PC-3 (cell line): ENCODE measurements at regions of chr17 and their contacts with region 1.

Region 1: DNA sequence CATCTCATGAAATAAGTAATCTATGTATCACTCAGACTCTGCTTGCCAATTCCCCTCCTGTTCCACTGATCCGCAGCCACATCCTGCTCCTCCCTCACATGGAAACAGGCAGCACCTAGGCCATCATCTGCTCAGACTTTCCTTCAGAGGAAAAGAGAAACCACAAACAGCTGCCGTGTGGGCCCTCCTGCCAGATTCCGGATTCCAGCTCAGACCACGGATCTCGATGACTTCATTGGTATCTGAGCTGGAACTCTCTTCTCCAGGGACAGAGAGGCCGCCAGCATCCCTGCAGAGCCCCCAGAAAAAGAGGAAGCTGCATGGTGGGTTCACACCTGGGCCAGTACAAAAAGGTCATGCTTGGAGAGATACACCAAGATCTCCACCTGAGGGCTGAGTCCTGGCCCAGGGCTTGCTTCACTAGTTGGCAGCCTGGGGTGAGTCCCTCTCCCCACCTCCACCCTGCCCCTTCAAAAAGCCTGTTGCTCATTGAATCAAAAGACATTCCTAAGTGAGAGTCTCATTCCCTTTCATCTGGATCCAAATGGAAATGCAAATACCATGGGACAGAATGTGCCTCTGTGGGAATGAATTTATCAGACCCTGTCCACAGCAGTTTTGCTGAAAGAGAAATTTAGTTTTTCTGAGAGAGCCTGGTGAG is 47.2 kb downstream of the HOXB1 start:
- DNase-seq: peak; percentile 99
- ATAC-seq: peak; percentile 88
- H3K4me3 ChIP-seq: peak overlapping the region; percentile 22; the same call in 1 of the 2 replicates
- H3K27ac ChIP-seq: peak overlapping the region; percentile 97
- H3K4me1 ChIP-seq: peaks cover 59% of the 10 kb centered on the region
- H3K27me3 ChIP-seq: no peaks in the 10 kb centered on the region
- CTCF ChIP-seq: no peak

Region 2: DNA sequence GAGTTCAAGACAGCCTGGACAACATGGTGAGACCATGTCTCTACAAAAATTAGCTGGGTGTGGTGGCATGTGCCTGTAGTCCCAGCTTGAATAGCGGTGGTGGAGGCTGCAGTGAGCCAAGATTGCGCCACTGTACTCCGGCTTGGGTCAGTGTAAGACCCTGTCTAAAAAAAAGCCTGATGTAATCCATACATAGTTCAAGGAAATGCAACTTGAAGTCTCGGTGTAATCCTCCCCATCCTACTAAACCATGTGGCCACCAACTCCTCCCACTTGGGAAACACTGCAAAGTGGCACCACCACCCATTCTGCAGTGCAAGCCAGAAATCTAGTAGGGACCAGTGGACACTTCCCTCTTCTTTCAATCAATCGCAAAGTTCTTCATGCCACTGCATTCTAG is 839.3 kb before region 1 on chr17:
- CTCF ChIA-PET with region 1: no interaction called
- POLR2A ChIA-PET with region 1: no interaction called
- intact Hi-C with region 1: no loop called
- DNase-seq: no peak
- ATAC-seq: no peak
- H3K4me3 ChIP-seq: no peak overlapping the region
- H3K27ac ChIP-seq: no peak overlapping the region
- H3K4me1 ChIP-seq: peaks cover 8% of the 10 kb centered on the region
- H3K27me3 ChIP-seq: no peaks in the 10 kb centered on the region
- CTCF ChIP-seq: no peak

Region 3: DNA sequence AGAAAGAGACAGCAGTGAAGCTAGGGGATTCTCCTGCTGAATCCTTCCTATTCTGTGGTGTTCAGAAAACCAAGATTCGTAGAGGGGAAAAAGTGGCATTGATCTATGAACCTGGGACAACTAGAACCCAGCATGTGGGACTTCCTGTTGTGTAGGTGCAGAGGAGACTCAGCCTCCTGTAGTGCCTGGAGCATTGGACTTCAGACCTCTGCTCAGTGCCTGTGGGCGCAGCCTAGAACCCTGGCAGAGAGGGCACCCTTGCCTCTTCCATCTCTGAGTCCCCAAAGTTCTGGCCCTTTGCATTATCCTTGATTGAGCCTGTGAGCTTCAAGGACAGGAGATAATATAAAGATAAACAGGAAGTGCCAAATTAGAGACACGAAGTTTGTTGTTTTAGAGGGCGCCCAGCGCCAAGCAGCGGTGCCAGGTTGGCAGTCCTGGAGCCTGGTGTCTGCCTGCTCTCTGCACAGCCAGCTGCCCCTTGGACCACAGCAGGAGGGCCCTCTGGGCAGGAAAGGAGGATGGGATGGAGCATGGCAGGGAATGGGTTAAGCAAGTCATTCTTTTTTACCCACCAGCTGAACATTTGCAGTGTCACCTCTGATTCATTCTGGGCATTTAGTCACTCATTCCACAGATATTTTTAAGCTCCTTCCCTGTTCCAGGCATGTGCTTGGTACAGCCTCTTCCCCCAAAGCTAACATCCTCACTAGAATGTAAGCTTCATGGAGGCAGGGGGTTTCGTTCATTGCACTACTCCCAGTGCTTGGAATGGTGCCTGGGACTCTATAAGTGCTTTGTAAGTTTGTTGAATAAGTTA is 620.8 kb before region 1 on chr17:
- CTCF ChIA-PET with region 1: no interaction called
- POLR2A ChIA-PET with region 1: no interaction called
- intact Hi-C with region 1: no loop called
- DNase-seq: peak; percentile 93
- ATAC-seq: peak; percentile 73
- H3K4me3 ChIP-seq: no peak overlapping the region
- H3K27ac ChIP-seq: peak overlapping the region; percentile 42
- H3K4me1 ChIP-seq: peaks cover 28% of the 10 kb centered on the region
- H3K27me3 ChIP-seq: no peaks in the 10 kb centered on the region
- CTCF ChIP-seq: no peak

Region 4: DNA sequence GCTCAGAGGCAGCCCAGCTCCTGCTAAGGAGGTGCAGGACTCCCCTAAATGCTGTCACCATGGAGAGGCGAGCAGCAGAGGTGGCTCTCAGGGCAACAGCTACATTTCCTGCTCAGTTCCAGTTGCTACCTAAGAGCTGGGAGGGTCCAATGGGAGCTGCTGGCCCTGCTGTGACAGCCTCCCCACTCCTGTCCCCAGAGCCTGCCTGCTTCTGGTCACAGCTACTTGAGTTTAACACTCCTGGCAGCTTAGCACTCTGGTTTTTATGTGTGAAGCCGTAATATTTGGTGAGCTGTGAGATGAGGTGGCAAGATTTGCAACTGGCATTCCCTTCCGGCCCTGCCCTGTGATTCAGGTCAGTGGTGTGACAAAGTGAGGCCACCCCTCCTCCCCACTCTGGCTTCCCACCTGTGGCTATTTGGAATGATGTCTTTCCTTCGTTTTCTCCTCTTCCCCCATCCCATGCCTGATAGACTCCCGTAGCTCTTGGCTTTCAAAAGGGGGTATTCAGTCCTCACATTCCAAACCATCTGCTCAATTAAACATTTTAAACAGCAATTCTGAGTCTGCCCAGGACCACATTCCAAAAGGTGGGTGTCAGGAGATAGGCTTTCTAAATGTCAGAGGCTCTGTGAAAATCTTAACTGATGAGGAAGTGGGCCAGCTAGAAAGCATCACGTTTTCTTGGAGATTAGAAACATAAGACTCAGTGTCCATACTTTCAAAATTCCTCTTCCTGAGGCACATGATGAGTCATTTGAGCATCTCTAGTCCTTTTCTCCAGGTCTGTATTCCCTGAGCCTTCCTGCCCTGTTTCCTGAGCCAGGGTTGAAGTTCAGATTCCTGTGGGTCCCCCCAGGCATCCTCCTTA is 11.0 kb before region 1 on chr17:
- CTCF ChIA-PET with region 1: interaction called, 4 read pairs
- POLR2A ChIA-PET with region 1: interaction called, 8 read pairs
- intact Hi-C with region 1: loop called (anchors 1 kb)
- DNase-seq: peak; percentile 96
- ATAC-seq: peak; percentile 90
- H3K4me3 ChIP-seq: peak overlapping the region; percentile 26; the same call in 1 of the 2 replicates
- H3K27ac ChIP-seq: peak overlapping the region; percentile 93
- H3K4me1 ChIP-seq: peaks cover 24% of the 10 kb centered on the region
- H3K27me3 ChIP-seq: no peaks in the 10 kb centered on the region
- CTCF ChIP-seq: no peak

Region 5: DNA sequence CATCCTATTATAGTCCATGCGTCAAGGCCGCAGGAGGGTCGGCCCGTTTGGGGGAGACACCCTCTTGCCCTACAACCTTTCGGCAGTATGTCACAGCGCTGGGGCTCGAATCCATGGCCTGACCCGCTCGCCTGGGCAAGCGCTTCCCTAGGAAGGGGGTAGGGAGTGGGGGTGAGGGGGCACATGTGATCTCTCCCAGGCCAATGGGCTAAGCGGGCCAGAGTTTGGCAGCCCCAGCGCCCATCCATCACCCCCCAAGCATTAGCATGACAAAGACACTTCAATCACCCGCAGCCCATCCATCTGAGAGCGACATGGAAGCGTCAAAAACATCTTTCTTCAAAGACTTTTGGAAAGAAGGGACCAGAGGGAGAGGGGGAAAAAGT is 47.3 kb after region 1 on chr17 and contains the start of gene HOXB1:
- CTCF ChIA-PET with region 1: no interaction called
- POLR2A ChIA-PET with region 1: no interaction called
- intact Hi-C with region 1: no loop called
- DNase-seq: no peak
- ATAC-seq: no peak
- H3K4me3 ChIP-seq: no peak within 1 kb of the TSS
- H3K27ac ChIP-seq: no peak within 1 kb of the TSS
- H3K4me1 ChIP-seq: no peaks in the 10 kb centered on the region
- H3K27me3 ChIP-seq: no peaks in the 10 kb centered on the region
- CTCF ChIP-seq: no peak
- total RNA-seq, gene HOXB1: not detected in 2 replicates

Region 6: DNA sequence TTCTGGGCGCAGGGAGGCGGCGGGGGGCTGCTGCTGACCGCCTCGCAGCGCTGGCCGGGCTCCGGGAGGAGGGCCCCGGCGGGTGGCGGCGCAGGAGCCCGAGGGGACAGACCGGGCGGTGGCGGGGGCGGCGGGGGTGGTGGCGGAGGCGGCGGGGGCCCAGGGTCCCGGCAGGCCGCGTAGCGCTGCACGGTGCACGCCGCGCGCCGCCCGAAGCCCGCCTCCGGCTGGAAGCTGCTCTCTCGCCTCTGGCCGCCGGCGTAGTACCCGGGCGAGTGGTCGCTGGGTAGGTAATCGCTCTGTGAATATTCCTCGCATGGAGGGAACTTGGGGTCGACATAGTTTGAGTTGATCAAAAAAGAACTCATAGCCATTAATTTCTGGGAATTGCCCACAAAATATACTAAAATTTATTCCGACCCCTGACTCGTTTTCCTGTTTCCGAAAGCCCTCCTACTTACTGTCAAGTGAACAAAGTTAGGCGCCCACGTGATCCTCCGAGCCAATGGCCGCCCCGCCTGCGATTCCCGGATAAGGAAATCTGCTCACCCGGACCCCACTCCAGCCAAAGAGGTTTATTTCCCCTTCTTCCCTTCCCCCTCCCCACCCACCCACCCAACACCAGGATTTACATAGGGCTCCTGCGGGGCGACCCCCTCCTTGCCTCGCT is 94.5 kb after region 1 on chr17 and contains the start of gene HOXB4:
- CTCF ChIA-PET with region 1: no interaction called
- POLR2A ChIA-PET with region 1: no interaction called
- intact Hi-C with region 1: no loop called
- DNase-seq: no peak
- ATAC-seq: no peak
- H3K4me3 ChIP-seq: peak within 1 kb of the TSS; percentile 66
- H3K27ac ChIP-seq: no peak within 1 kb of the TSS
- H3K4me1 ChIP-seq: peaks cover 20% of the 10 kb centered on the region
- H3K27me3 ChIP-seq: no peaks in the 10 kb centered on the region
- CTCF ChIP-seq: no peak
- total RNA-seq, gene HOXB4: 0.22 and 0.58 TPM in 2 replicates

Region 7: GRCh38 chr17:48593840-48594537 is 110.4 kb after region 1 on chr17:
- CTCF ChIA-PET with region 1: interaction called, 10 read pairs
- POLR2A ChIA-PET with region 1: no interaction called
- intact Hi-C with region 1: no loop called
- DNase-seq: peak; percentile 88
- ATAC-seq: peak; percentile 56
- H3K4me3 ChIP-seq: peak overlapping the region; percentile 4; the same call in 1 of the 2 replicates
- H3K27ac ChIP-seq: no peak overlapping the region
- H3K4me1 ChIP-seq: peaks cover 13% of the 10 kb centered on the region
- H3K27me3 ChIP-seq: no peaks in the 10 kb centered on the region
- CTCF ChIP-seq: peak; percentile 97